ENCODE measurements at regions of chrX and their contacts with region 1.

Region 1: DNA sequence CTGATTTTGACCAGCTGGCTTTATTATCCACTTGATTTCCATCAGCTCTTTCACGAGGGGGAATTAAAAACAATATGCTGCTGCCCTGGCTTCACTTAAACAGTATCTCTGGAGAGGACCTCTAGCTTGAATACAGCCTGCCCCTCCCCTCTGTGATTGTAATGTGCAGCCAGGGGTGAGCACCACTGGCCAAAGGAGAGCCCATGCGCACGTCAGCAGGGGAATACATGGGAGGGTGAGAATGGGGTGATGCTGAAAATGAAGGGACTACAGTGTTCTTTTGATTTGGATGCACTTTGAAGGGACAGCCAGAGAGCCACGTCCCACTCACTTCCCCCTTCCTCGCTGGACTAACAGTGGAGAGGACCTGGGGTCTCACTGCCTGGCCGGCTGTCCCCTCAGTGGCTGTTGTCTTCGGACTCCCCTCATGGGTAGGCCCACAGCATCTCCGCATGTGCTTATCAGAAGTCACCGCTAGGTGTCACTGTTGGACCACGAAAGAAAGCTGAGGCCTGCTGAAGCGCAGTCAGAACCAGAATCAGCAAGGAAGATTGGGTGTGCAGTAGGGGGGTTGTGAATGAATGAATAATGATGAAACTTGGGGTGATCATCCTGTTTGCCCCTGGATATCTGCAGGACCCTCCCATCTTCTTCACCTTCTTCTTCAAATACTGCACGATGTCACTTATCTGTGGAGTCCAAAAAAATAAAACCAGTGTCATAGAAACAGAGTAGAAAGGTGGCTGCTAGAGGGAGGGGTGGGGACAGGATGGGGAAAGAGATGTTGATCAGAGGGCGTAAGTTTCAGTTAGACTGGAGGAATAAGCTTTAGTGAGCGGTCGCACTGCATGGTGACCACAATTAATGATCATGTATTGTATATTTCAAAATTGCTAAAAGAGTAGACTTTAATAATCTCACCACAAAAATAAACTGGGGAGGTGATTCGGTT is 32.8 kb downstream of the CLCN4 start:
- DNase-seq: peak; percentile 89
- H3K4me3 ChIP-seq: no peak overlapping the region
- H3K27ac ChIP-seq: peak overlapping the region in 2 of 4 donors; percentile 13 to 23
- H3K4me1 ChIP-seq: peaks cover 0 to 14% (median 6%) of the 10 kb centered on the region in 4 donors
- H3K27me3 ChIP-seq: no peaks in the 10 kb centered on the region
- CTCF ChIP-seq: peak; percentile 55 to 88 (median 68)
- EP300 ChIP-seq: no peak
- POLR2A ChIP-seq: no peak

Region 2: GRCh38 chrX:10244915-10245622 is 55.5 kb after region 1 on chrX:
- intact Hi-C with region 1: no loop called
- DNase-seq: no peak
- H3K4me3 ChIP-seq: no peak overlapping the region
- H3K27ac ChIP-seq: peak overlapping the region in 1 of 4 donors; percentile 6
- H3K4me1 ChIP-seq: peaks cover 0 to 25% (median 3%) of the 10 kb centered on the region in 4 donors
- H3K27me3 ChIP-seq: no peaks in the 10 kb centered on the region
- CTCF ChIP-seq: no peak
- EP300 ChIP-seq: no peak
- POLR2A ChIP-seq: no peak

Region 3: GRCh38 chrX:10326578-10326977 is 137.0 kb after region 1 on chrX:
- intact Hi-C with region 1: loop called (anchors 10 kb)
- DNase-seq: no peak
- H3K4me3 ChIP-seq: no peak overlapping the region
- H3K27ac ChIP-seq: no peak overlapping the region
- H3K4me1 ChIP-seq: no peaks in the 10 kb centered on the region
- H3K27me3 ChIP-seq: no peaks in the 10 kb centered on the region
- CTCF ChIP-seq: no peak
- EP300 ChIP-seq: no peak
- POLR2A ChIP-seq: no peak

Region 4: GRCh38 chrX:10482261-10482660 is 292.7 kb after region 1 on chrX:
- intact Hi-C with region 1: no loop called
- DNase-seq: no peak
- H3K4me3 ChIP-seq: no peak overlapping the region
- H3K27ac ChIP-seq: peak overlapping the region in 3 of 4 donors; percentile 28 to 65 (median 55)
- H3K4me1 ChIP-seq: peaks cover 0 to 32% (median 8%) of the 10 kb centered on the region in 4 donors
- H3K27me3 ChIP-seq: no peaks in the 10 kb centered on the region
- CTCF ChIP-seq: no peak
- EP300 ChIP-seq: no peak
- POLR2A ChIP-seq: no peak

Region 5: DNA sequence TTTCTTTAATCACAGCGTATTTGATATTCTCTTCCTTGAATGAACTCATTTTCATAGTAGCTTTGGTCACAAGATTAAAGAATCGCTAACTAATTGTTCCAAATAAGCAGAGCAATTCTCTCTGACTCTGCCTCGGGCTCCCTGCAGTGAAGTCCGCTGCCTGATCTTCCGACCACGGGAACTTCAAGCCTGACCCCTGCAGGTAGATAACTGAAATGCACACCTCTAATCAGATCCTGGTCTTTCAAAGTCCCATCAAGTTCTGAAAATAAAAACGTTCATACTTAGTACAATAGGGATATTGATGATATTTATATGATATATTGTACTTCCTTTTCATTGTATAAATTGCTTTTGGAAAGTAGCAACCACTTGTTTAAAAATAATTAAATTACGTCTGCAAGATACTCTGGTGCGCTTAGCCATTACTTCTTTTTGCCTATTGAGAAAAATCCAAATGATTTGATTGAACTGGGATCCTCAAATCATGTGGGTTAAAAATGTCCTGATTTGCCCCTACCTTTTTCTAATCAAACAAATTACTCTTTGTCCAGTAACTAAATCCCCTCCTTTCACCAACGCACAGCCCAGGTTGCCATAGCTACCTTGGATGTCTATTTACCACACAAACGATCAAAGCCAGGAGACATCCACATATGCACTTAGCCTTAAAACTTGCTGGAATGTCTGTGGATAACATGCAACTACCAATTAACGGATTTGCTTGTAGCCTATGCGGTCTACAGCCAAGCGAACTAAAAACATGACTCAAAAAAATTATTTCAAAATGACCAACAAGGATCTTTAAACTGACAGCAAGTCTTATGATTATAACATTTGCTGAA is 426.6 kb after region 1 on chrX:
- intact Hi-C with region 1: loop called (anchors 1 kb)
- DNase-seq: peak; percentile 72
- H3K4me3 ChIP-seq: peak overlapping the region in 3 of 4 donors; percentile 20 to 68 (median 61)
- H3K27ac ChIP-seq: peak overlapping the region in 3 of 4 donors; percentile 83 to 90 (median 86)
- H3K4me1 ChIP-seq: peaks cover 0 to 51% (median 17%) of the 10 kb centered on the region in 4 donors
- H3K27me3 ChIP-seq: no peaks in the 10 kb centered on the region
- CTCF ChIP-seq: peak; percentile 51 to 57 (median 56)
- EP300 ChIP-seq: no peak
- POLR2A ChIP-seq: no peak

Region 6: GRCh38 chrX:10636337-10636736 is 446.7 kb after region 1 on chrX:
- intact Hi-C with region 1: loop called (anchors 1 kb)
- DNase-seq: no peak
- H3K4me3 ChIP-seq: peak overlapping the region in 1 of 4 donors; percentile 15
- H3K27ac ChIP-seq: peak overlapping the region; percentile 2 to 78 (median 71)
- H3K4me1 ChIP-seq: peaks cover 0 to 19% (median 9%) of the 10 kb centered on the region in 4 donors
- H3K27me3 ChIP-seq: no peaks in the 10 kb centered on the region
- CTCF ChIP-seq: peak; percentile 33 to 46 (median 44)
- EP300 ChIP-seq: no peak
- POLR2A ChIP-seq: no peak

Region 7: DNA sequence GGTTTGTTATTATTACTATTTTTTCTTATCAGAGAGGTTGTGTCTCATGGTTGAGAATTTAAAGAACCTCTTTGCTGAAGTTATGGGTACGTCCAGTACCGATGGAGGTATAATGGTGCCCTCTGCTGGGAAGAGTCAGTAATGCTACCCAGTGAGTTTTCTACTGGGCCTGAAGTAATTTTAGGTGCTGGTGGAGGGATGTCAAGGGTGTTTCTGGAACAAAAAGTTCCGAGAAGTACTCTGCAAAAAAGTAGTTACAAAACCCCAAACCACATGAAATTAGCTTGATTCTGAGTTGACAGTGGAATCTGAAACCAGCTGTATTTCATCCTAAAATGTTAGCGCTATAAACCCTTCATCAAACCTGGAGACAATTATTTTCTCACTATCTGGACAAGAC is 533.3 kb after region 1 on chrX:
- intact Hi-C with region 1: loop called (anchors 2 kb)
- DNase-seq: peak; percentile 83
- H3K4me3 ChIP-seq: no peak overlapping the region
- H3K27ac ChIP-seq: peak overlapping the region in 2 of 4 donors; percentile 19 to 33
- H3K4me1 ChIP-seq: peaks cover 0 to 19% (median 7%) of the 10 kb centered on the region in 4 donors
- H3K27me3 ChIP-seq: no peaks in the 10 kb centered on the region
- CTCF ChIP-seq: peak; percentile 36 to 58 (median 53)
- EP300 ChIP-seq: no peak
- POLR2A ChIP-seq: no peak

Region 8: GRCh38 chrX:11100281-11101035 is 910.9 kb after region 1 on chrX:
- intact Hi-C with region 1: loop called (anchors 2 kb)
- DNase-seq: peak; percentile 74
- H3K4me3 ChIP-seq: no peak overlapping the region
- H3K27ac ChIP-seq: peak overlapping the region; percentile 66 to 73 (median 70)
- H3K4me1 ChIP-seq: peaks cover 0 to 12% (median 0%) of the 10 kb centered on the region in 4 donors
- H3K27me3 ChIP-seq: no peaks in the 10 kb centered on the region
- CTCF ChIP-seq: peak; percentile 18 to 46 (median 30)
- EP300 ChIP-seq: no peak
- POLR2A ChIP-seq: no peak

Region 9: GRCh38 chrX:11137543-11138139 is 948.0 kb after region 1 on chrX:
- intact Hi-C with region 1: loop called (anchors 1 kb)
- DNase-seq: no peak
- H3K4me3 ChIP-seq: no peak overlapping the region
- H3K27ac ChIP-seq: no peak overlapping the region
- H3K4me1 ChIP-seq: no peaks in the 10 kb centered on the region
- H3K27me3 ChIP-seq: no peaks in the 10 kb centered on the region
- CTCF ChIP-seq: peak in 3 of 4 experiments; percentile 12 to 59 (median 20)
- EP300 ChIP-seq: no peak
- POLR2A ChIP-seq: no peak